ENCODE measurements at regions of chr12 and their contacts with region 1.

Region 1: GRCh38 chr12:6944381-6945186 is 762 bp downstream of the C12orf57 start:
- DNase-seq: peak; percentile 88 to 98 (median 94)

Region 2: GRCh38 chr12:6825398-6826124 is 119.0 kb before region 1 on chr12:
- intact Hi-C with region 1: no loop called
- DNase-seq: peak; percentile 67 to 96 (median 89)

Region 3: GRCh38 chr12:6970089-6970527 is 25.5 kb after region 1 on chr12:
- intact Hi-C with region 1: loop called (anchors 2 kb)
- DNase-seq: peak in 5 of 42 donors; percentile 23 to 54 (median 33)

Region 4: DNA sequence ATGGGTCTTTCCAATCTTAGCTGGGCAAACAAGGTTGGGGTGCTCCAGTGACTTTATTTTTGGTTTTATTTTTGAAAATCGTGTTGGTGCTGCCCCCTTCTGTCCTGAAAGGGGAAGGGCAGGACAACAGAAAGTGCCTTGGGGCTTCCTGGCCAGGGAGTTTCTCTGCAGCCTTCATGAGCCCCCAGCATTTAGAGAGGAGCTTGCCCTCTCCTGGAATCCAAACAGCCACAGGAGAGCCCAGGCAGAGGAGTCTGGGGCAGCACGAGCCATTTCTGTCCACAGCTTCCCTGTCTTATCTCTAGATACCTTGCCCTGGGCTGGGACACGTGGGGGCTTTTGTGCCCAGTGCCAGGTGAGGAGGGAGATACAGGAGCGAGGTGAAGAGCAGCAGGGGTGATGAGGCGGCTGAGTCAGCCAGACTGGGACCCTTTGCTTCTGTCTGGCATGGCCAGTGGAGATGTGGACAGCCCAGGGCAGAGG is 168.8 kb after region 1 on chr12:
- intact Hi-C with region 1: loop called (anchors 5 kb)
- DNase-seq: peak in 14 of 42 donors; percentile 18 to 62 (median 34)